HEK293T (cell line): ENCODE measurements at regions of chr11 and their contacts with region 1.

Region 1: DNA sequence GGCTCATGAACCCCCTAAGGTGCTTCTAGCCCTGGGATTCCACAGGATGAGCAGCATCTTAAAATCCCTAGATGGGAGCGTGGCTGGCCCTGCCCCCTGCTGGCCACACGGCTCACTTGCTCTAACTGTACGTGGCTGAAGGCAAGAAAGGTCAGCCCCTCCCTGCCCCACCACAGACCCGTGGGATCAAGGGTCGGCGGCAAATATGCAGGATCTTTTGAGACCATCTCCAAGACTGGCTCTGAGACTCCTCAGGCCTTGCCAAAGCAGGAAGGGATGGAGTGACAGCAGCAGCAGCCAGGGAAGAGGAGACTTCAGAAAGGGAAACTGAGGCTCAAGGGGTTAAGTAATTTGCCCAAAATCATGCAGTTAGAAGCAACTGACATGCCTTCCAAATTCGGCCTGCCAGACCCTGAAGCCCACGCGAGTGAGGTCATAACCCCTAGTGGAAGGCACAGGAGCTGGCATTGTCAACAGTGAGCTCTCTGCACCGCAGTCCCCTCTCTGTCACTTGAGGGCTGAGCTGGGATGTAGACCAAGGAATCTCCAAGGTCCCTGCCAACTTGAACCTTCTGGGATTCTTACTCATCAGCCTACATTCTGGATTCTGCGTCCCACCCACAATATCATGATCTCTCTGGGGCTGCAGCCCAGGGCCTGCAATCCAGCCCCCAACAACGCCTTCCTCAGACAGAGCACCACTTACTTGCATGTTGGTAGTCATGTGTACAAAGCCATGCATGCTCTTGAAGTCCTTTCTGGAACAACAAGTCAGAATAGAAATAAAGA is 31.4 kb downstream of the CREB3L1 start:
- DNase-seq: peak; percentile 76

Region 2: DNA sequence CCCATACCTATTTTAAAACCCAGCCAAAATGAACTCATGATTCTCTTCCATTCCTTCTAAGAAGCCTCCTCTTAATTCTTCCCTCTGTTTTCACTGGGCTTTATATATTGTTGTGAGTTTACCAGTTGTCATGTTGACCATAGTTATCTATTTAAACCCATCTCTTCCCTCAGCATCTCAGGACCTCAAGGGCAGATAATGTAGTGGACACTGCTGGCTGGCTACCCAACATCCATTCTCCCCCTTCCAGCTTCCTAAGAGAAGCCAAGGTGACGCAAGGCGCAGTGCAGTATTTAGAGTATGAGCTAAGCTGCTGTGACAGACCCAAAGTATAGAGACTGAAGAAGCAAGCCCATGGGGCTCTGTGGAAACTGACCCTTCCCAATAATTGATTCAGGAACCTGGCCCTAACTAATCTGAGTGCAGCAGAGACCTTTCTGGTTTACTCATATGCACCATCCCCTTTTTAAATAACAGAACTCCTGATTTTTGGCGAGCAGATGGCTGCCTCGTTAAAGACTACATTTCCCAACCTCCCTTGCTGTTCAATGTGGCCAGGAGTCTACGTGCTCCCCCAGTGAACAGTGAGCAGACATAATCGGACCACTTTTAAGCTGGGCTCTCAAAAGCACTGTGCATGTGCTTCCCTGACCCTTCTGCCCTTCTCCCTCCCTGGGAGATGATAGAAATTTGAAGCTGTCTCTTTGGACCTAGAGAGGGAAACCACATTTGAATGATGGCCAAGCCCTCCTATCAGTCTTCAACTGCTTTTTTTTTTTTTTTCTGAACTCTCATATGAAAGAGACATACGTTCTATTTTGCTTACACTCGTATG is 59.5 kb before region 1 on chr11:
- CTCF ChIA-PET with region 1: interaction called, 11 read pairs
- POLR2A ChIA-PET with region 1: interaction called, 38 read pairs
- DNase-seq: no peak